IMR-90 (cell line): ENCODE measurements at regions of chr5 and their contacts with region 1.

Region 1: DNA sequence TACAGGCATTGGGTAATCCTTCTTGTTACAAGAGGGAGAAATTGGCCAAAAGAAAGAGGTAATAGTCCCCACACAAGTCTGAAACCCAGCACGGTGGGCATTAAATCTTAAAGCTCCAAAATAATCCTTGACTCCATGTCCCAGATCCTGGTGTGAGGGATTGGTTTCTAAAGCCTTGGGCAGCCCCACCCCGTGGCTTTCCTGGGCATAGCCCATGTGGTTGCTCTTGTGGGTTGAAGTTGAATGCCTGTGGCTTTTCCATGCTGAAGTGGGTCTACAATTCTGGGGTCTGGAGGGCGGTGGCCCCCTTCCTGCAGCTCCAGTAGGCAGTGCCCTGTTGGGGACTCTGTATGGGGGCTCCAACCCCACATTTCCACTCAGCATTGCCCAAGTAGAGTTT is 91.8 kb upstream of the LARP1 start:
- DNase-seq: no peak
- ATAC-seq: no peak
- H3K4me3 ChIP-seq: no peak overlapping the region
- H3K27ac ChIP-seq: no peak overlapping the region
- H3K4me1 ChIP-seq: no peaks in the 10 kb centered on the region
- H3K27me3 ChIP-seq: peaks cover under 1% of the 10 kb centered on the region; the same call in 1 of the 2 replicates
- CTCF ChIP-seq: no peak
- POLR2A ChIP-seq: no peak
- RAD21 ChIP-seq: no peak

Region 2: GRCh38 chr5:154010660-154011059 is 652.8 kb before region 1 on chr5:
- CTCF ChIA-PET with region 1: no interaction called
- POLR2A ChIA-PET with region 1: no interaction called
- dilution Hi-C with region 1: no loop called
- in situ Hi-C with region 1: no loop called
- intact Hi-C with region 1: no loop called
- DNase-seq: no peak
- ATAC-seq: no peak
- H3K4me3 ChIP-seq: no peak overlapping the region
- H3K27ac ChIP-seq: no peak overlapping the region
- H3K4me1 ChIP-seq: no peaks in the 10 kb centered on the region
- H3K27me3 ChIP-seq: no peaks in the 10 kb centered on the region
- CTCF ChIP-seq: no peak
- POLR2A ChIP-seq: no peak
- RAD21 ChIP-seq: no peak

Region 3: GRCh38 chr5:154345255-154345952 is 318.0 kb before region 1 on chr5:
- CTCF ChIA-PET with region 1: no interaction called
- POLR2A ChIA-PET with region 1: no interaction called
- dilution Hi-C with region 1: no loop called
- in situ Hi-C with region 1: no loop called
- intact Hi-C with region 1: no loop called
- DNase-seq: no peak
- ATAC-seq: no peak
- H3K4me3 ChIP-seq: no peak overlapping the region
- H3K27ac ChIP-seq: no peak overlapping the region
- H3K4me1 ChIP-seq: peaks cover 4% of the 10 kb centered on the region
- H3K27me3 ChIP-seq: no peaks in the 10 kb centered on the region
- CTCF ChIP-seq: no peak
- POLR2A ChIP-seq: no peak
- RAD21 ChIP-seq: no peak

Region 4: DNA sequence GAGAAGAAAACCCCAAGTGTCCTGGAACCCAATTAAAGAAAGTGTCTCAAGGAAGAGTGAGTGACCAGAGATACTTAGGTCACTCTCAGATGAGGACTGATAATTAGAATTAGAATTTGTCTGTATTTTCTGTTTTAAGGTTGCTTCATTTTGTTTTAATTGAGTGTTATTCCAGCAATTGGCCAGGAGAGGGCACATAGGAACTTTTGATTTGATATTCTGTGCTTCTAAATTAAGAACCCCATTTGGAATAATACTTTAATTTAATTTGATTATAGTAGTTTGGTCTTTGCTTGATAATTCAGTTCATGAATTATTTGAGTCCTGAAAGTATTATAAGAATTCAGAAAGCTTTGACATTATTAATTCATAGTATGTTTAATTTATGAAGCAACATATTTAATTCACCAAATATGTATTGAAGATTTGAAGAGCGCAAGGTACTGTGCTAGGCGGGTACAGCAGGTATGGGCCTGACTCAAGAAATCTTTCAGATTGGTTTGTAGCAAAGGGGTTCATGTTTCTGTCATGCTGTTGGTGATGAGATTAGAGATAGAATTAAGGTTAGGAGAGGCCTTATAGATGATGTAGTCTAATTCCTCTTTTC is 282.4 kb after region 1 on chr5:
- CTCF ChIA-PET with region 1: no interaction called
- POLR2A ChIA-PET with region 1: no interaction called
- dilution Hi-C with region 1: no loop called
- in situ Hi-C with region 1: no loop called
- intact Hi-C with region 1: no loop called
- DNase-seq: peak; percentile 28
- ATAC-seq: no peak
- H3K4me3 ChIP-seq: no peak overlapping the region
- H3K27ac ChIP-seq: no peak overlapping the region
- H3K4me1 ChIP-seq: no peaks in the 10 kb centered on the region
- H3K27me3 ChIP-seq: no peaks in the 10 kb centered on the region
- CTCF ChIP-seq: peak; percentile 59
- POLR2A ChIP-seq: no peak
- RAD21 ChIP-seq: peak; percentile 43

Region 5: DNA sequence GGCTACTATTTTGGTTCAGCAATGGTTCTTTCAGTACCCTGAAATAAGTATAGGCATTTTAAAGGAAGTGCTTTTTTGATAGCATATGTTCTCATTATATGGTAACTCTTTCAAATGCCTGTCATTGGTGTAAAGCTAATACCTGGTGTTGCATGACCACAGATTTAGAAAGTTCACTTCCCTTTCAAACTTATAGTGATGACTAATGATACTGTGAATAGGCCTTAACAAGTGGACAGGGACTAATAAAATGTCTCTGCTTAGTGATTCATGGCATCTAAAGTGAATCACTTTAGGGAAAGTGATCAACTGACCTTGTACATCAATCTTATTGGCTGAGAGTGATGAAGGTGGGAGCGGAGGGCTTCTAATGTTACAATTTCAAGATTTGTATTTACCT is 299.1 kb after region 1 on chr5:
- CTCF ChIA-PET with region 1: no interaction called
- POLR2A ChIA-PET with region 1: interaction called, 16 read pairs
- dilution Hi-C with region 1: no loop called
- in situ Hi-C with region 1: no loop called
- intact Hi-C with region 1: no loop called
- DNase-seq: peak; percentile 47
- ATAC-seq: no peak
- H3K4me3 ChIP-seq: no peak overlapping the region
- H3K27ac ChIP-seq: no peak overlapping the region
- H3K4me1 ChIP-seq: no peaks in the 10 kb centered on the region
- H3K27me3 ChIP-seq: no peaks in the 10 kb centered on the region
- CTCF ChIP-seq: no peak
- POLR2A ChIP-seq: no peak
- RAD21 ChIP-seq: no peak